GM12878 (cell line): ENCODE measurements at regions of chr6 and their contacts with region 1.

Region 1: GRCh38 chr6:91865889-91866288 is 1279.0 kb upstream of the MAP3K7 start:
- DNase-seq: no peak
- ATAC-seq: peak; percentile 37
- H3K4me3 ChIP-seq: no peak overlapping the region
- H3K27ac ChIP-seq: no peak overlapping the region
- H3K4me1 ChIP-seq: no peaks in the 10 kb centered on the region
- H3K27me3 ChIP-seq: no peaks in the 10 kb centered on the region
- CTCF ChIP-seq: no peak
- EP300 ChIP-seq: no peak
- POLR2A ChIP-seq: no peak
- RAD21 ChIP-seq: no peak

Region 2: DNA sequence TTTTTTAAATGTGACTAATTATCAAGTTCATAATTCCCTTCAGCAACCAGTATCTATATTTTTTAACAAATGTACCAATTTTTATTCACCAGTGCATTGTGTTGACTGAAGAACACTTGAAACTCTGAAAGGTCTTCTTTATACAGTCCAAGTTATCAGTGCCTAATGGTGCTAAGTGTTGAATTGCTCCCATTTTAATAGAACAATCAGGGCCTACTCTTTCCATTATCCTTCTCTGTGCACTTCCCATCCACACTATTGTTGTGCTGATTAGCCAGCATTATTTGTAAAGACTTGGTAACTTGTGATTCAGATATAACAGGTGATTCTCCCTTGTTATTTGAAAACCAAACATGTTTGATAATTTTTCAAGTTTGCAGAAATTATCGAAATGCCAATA is 69.3 kb before region 1 on chr6:
- CTCF ChIA-PET with region 1: no interaction called
- POLR2A ChIA-PET with region 1: no interaction called
- RAD21 ChIA-PET with region 1: no interaction called
- SMC1A ChIA-PET with region 1: no interaction called
- in situ Hi-C with region 1: no loop called
- intact Hi-C with region 1: no loop called
- DNase-seq: no peak
- ATAC-seq: no peak
- H3K4me3 ChIP-seq: no peak overlapping the region
- H3K27ac ChIP-seq: no peak overlapping the region
- H3K4me1 ChIP-seq: no peaks in the 10 kb centered on the region
- H3K27me3 ChIP-seq: no peaks in the 10 kb centered on the region
- CTCF ChIP-seq: no peak
- EP300 ChIP-seq: no peak
- POLR2A ChIP-seq: no peak
- RAD21 ChIP-seq: no peak

Region 3: DNA sequence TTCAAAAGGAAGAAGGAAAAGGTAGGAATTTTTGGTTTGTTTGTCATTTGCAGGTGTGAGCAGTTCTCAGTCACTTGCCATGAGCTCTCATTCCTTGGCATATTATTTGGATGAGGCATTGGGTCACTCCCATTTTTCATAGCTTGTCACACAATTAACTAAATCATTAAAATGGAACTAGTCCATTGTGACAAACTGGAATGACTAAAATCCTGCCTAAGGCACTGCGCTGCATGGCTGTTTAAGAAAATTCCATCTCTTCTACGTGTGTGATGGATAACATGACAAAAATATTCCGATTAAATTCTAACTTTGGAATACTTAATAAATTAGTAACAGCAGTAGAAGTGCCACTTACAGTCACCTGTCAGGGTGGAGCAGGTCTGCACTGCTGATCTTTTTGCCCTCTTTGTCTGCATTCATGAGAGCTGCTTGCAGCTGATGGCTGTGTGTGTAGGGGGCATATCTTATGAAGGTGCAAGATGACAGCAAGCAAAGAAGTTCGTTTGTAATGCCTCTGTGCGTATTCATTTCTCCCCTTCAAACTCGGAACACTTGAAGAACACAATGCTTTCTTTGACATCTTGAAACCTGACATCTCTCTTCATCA is 13.6 kb after region 1 on chr6:
- CTCF ChIA-PET with region 1: no interaction called
- POLR2A ChIA-PET with region 1: no interaction called
- RAD21 ChIA-PET with region 1: no interaction called
- SMC1A ChIA-PET with region 1: interaction called, 13 read pairs
- in situ Hi-C with region 1: no loop called
- intact Hi-C with region 1: no loop called
- DNase-seq: no peak
- ATAC-seq: no peak
- H3K4me3 ChIP-seq: no peak overlapping the region
- H3K27ac ChIP-seq: no peak overlapping the region
- H3K4me1 ChIP-seq: no peaks in the 10 kb centered on the region
- H3K27me3 ChIP-seq: no peaks in the 10 kb centered on the region
- CTCF ChIP-seq: no peak
- EP300 ChIP-seq: no peak
- POLR2A ChIP-seq: no peak
- RAD21 ChIP-seq: no peak